ENCODE measurements at regions of chr3 and their contacts with region 1.

Region 1: DNA sequence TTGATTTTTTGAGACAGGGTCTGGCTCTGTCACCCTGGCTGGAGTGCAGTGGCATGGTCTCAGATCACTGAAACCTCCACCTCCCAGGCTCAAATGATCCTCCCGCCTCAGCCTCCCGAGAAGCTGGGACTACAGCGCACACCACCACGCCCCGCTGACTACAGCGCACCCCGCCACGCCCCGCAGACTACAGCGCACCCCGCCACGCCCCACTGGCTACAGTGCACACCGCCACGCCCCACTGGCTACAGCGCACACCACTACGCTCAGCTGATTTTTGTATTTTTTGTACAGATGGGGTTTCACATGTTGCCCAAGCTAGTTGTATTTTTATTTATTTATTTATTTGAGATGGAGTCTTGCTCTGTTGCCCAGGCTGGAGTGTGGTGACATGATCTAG is 35.6 kb downstream of the SLC51A start:
- DNase-seq: no peak
- ATAC-seq: peak; percentile 48
- H3K4me3 ChIP-seq: no peak overlapping the region
- H3K4me1 ChIP-seq: peaks cover 10% of the 10 kb centered on the region
- CTCF ChIP-seq: no peak

Region 2: DNA sequence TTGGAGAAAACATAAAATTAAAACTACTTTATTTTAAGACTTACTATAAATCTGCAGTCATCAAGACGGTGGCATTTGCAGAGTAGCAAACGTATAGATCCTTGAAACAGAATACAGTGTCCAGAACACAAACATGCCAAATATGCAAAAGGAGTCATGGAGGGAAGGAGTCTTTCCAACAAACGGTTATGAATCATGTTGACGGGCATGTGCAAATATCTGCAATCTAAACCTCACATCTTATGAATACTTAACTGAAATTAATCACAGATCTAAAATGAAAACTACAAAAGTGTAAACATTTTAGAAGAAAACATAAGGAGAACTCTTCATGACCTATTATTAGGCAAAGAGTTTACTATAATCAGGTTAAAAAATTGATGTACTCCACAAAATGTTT is 239.4 kb before region 1 on chr3:
- intact Hi-C with region 1: no loop called
- DNase-seq: no peak
- ATAC-seq: no peak
- H3K4me3 ChIP-seq: no peak overlapping the region
- H3K4me1 ChIP-seq: no peaks in the 10 kb centered on the region
- CTCF ChIP-seq: no peak

Region 3: DNA sequence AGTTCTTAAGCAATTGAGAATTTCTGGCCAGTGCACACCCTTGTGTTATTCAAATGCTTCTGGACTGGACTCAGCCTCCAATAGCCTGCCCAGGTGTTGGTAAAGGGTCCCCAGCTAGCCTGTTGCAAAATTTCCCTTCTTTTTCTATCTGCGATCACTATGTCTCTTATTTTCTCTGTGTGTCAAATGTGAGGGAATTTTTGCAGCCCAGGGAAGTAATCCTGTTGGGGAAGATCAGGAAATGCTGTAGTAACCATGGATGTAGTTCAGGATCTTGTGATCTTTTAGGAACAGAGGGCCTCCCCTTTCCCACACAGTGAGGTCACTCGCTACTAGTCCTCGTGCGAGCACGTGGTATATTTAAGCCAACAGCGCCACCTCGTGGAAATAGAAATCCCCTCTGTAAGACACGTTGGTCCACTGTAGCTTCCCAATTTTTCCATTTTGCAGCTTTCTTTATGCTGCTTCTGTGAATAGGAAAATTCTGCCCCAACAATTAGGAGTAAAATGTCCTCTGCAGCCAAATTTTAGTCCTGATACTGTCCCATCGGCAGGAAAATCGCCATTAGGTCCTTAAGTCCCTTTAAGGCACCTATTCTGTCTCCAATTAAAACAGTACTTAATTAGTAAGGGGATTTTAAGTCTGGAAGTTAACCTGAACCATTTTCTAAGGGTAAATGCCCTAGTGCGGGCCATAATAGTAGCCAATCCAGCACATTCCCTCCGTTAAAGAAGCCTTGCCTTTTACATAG is 267.2 kb after region 1 on chr3:
- intact Hi-C with region 1: loop called in 1 of 2 experiments (anchors 10 kb)
- DNase-seq: peak in 2 of 3 donors; percentile 38 to 80
- ATAC-seq: peak; percentile 48
- H3K4me3 ChIP-seq: no peak overlapping the region
- H3K4me1 ChIP-seq: no peaks in the 10 kb centered on the region
- CTCF ChIP-seq: no peak